ENCODE measurements at regions of chr9 and their contacts with region 1.

Region 1: GRCh38 chr9:109903515-109904138 is 123.6 kb downstream of the PALM2AKAP2 start:
- DNase-seq: peak; percentile 51 to 65 (median 58)
- H3K4me3 ChIP-seq: no peak overlapping the region
- H3K4me3 Mint-ChIP-seq: no peak overlapping the region
- H3K27ac ChIP-seq: no peak overlapping the region
- H3K27ac Mint-ChIP-seq: no peak overlapping the region
- H3K4me1 ChIP-seq: no peaks in the 10 kb centered on the region
- H3K4me1 Mint-ChIP-seq: peaks cover 0 to 5% (median 0%) of the 10 kb centered on the region in 4 donors
- H3K27me3 ChIP-seq: no peaks in the 10 kb centered on the region
- H3K27me3 Mint-ChIP-seq: peaks cover 2 to 4% of the 10 kb centered on the region in 2 donors

Region 2: GRCh38 chr9:108687006-108687987 is 1216.3 kb before region 1 on chr9:
- CTCF ChIA-PET with region 1: no interaction called
- POLR2A ChIA-PET with region 1: no interaction called
- intact Hi-C with region 1: no loop called
- DNase-seq: no peak
- H3K4me3 ChIP-seq: no peak overlapping the region
- H3K4me3 Mint-ChIP-seq: no peak overlapping the region
- H3K27ac ChIP-seq: no peak overlapping the region
- H3K27ac Mint-ChIP-seq: no peak overlapping the region
- H3K4me1 ChIP-seq: no peaks in the 10 kb centered on the region
- H3K4me1 Mint-ChIP-seq: no peaks in the 10 kb centered on the region
- H3K27me3 ChIP-seq: no peaks in the 10 kb centered on the region
- H3K27me3 Mint-ChIP-seq: no peaks in the 10 kb centered on the region

Region 3: GRCh38 chr9:109831998-109832658 is 71.5 kb before region 1 on chr9:
- CTCF ChIA-PET with region 1: no interaction called
- POLR2A ChIA-PET with region 1: no interaction called
- intact Hi-C with region 1: no loop called
- DNase-seq: no peak
- H3K4me3 ChIP-seq: no peak overlapping the region
- H3K4me3 Mint-ChIP-seq: no peak overlapping the region
- H3K27ac ChIP-seq: no peak overlapping the region
- H3K27ac Mint-ChIP-seq: no peak overlapping the region
- H3K4me1 ChIP-seq: no peaks in the 10 kb centered on the region
- H3K4me1 Mint-ChIP-seq: no peaks in the 10 kb centered on the region
- H3K27me3 ChIP-seq: no peaks in the 10 kb centered on the region
- H3K27me3 Mint-ChIP-seq: peaks cover 12 to 15% of the 10 kb centered on the region in 2 donors

Region 4: DNA sequence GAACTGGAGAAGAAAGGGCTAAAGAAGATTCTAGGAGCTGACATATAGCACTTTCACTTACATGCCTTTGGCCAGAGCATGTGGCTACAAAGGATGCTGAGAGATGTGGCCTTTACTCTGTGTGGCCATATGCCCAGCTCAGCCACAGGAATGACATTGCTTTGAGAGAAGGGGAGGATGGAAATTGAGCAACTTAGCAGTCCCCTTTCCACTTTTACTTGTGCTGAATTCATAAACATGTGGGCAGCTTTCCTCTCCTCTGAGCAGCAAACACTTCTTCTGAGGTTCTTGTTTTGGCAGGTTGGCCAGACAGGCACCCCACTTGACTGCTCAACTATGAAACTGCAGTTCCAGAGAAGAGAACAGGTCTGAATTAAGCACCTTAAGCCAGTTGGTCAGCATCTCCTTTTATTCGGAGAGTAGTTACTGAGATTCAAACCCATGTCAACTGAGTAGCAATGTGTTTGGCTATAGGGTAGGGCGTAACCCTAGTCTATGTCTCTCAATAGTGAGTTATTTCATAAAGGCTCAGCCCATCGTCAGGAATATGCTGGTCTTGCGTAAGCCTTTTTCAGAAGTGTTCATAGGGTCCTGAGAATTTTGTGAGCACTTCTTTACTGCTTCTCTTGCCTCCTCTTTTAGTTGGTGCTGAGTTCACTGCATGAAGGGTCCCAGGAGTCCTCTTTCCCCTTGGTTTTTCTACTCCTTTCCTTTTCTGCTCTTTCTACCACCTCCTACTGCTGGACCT is 10.8 kb after region 1 on chr9:
- CTCF ChIA-PET with region 1: interaction called, 15 read pairs
- POLR2A ChIA-PET with region 1: no interaction called
- intact Hi-C with region 1: no loop called
- DNase-seq: no peak
- H3K4me3 ChIP-seq: no peak overlapping the region
- H3K4me3 Mint-ChIP-seq: no peak overlapping the region
- H3K27ac ChIP-seq: no peak overlapping the region
- H3K27ac Mint-ChIP-seq: no peak overlapping the region
- H3K4me1 ChIP-seq: peaks cover 16% of the 10 kb centered on the region
- H3K4me1 Mint-ChIP-seq: peaks cover 13 to 16% (median 14%) of the 10 kb centered on the region in 4 donors
- H3K27me3 ChIP-seq: no peaks in the 10 kb centered on the region
- H3K27me3 Mint-ChIP-seq: no peaks in the 10 kb centered on the region

Region 5: DNA sequence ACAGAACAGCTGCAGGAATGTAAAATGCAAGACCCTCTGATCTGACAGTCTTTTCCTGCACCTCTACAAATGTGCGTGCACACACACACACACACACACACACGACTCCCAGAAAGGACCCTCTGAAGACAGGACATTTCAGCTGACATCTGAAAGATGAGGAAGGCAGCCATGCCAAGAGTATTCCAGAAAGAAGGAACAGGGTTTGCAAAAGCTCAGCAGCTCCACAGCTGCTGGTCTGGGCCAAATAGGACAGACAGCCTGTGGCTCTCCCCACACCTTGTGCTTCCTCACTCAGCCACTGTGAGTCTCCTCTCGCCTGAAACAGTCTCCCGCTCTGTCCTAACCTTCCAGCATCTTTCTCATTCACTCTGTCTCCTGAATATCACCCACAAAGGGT is 65.4 kb after region 1 on chr9:
- CTCF ChIA-PET with region 1: interaction called, 21 read pairs
- POLR2A ChIA-PET with region 1: no interaction called
- intact Hi-C with region 1: no loop called
- DNase-seq: no peak
- H3K4me3 ChIP-seq: no peak overlapping the region
- H3K4me3 Mint-ChIP-seq: peak overlapping the region; percentile 5 to 73 (median 54)
- H3K27ac ChIP-seq: peak overlapping the region; percentile 47
- H3K27ac Mint-ChIP-seq: peak overlapping the region; percentile 82 to 96 (median 90)
- H3K4me1 ChIP-seq: peaks cover 43% of the 10 kb centered on the region
- H3K4me1 Mint-ChIP-seq: peaks cover 23 to 71% (median 50%) of the 10 kb centered on the region in 4 donors
- H3K27me3 ChIP-seq: no peaks in the 10 kb centered on the region
- H3K27me3 Mint-ChIP-seq: no peaks in the 10 kb centered on the region

Region 6: GRCh38 chr9:110048403-110048975 is 144.9 kb after region 1 on chr9:
- CTCF ChIA-PET with region 1: interaction called, 5 read pairs
- POLR2A ChIA-PET with region 1: interaction called, 3 read pairs
- intact Hi-C with region 1: loop called (anchors 2 kb)
- DNase-seq: peak; percentile 62 to 78 (median 74)
- H3K4me3 ChIP-seq: peak overlapping the region; percentile 73 to 95
- H3K4me3 Mint-ChIP-seq: peak overlapping the region; percentile 88 to 94 (median 92)
- H3K27ac ChIP-seq: peak overlapping the region; percentile 34
- H3K27ac Mint-ChIP-seq: peak overlapping the region in 6 of 7 donors; percentile 3 to 81 (median 75)
- H3K4me1 ChIP-seq: peaks cover 27% of the 10 kb centered on the region
- H3K4me1 Mint-ChIP-seq: peaks cover 16 to 45% (median 37%) of the 10 kb centered on the region in 4 donors
- H3K27me3 ChIP-seq: no peaks in the 10 kb centered on the region
- H3K27me3 Mint-ChIP-seq: peaks cover 2 to 5% of the 10 kb centered on the region in 2 donors

Region 7: DNA sequence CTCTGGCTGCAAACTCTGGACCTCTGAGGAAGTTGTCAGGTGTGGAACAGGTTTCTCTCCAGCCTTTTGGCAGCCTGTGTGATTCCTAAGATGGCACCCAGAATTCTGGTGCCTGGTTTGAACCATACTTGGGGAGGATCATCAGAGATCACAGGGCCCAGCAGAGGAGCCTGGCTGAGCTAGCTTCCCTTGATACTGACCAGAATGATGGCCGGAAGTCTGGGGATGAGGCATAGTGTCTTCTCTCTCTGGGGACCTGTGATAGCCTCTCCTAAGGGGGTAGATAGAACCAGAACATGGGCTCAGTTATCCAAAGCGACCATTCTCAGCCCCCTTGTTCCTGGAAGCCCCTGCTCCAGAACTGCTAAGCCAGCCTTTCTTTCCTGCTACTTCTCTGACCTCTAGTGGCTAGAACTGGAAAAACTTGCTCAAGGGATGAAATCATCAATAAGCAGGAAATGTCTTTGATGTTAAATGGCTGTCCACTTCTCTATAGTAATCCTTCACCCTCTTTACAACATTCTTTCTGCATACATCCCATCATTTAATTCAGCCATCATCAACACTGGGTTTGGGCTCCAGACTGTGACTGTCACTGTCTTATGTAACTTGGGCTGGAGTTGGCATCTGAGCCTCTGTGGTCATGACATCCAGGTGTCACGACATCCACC is 249.2 kb after region 1 on chr9:
- CTCF ChIA-PET with region 1: interaction called, 98 read pairs
- POLR2A ChIA-PET with region 1: interaction called, 3 read pairs
- intact Hi-C with region 1: loop called (anchors 1 kb)
- DNase-seq: peak in 4 of 5 donors; percentile 20 to 34 (median 30)
- H3K4me3 ChIP-seq: no peak overlapping the region
- H3K4me3 Mint-ChIP-seq: no peak overlapping the region
- H3K27ac ChIP-seq: no peak overlapping the region
- H3K27ac Mint-ChIP-seq: peak overlapping the region in 2 of 7 donors; percentile 49 to 72
- H3K4me1 ChIP-seq: peaks cover 54% of the 10 kb centered on the region
- H3K4me1 Mint-ChIP-seq: peaks cover 39 to 81% (median 62%) of the 10 kb centered on the region in 4 donors
- H3K27me3 ChIP-seq: no peaks in the 10 kb centered on the region
- H3K27me3 Mint-ChIP-seq: no peaks in the 10 kb centered on the region